ENCODE measurements at regions of chr12 and their contacts with region 1.

Region 1: GRCh38 chr12:124940549-124941527 is 26.4 kb upstream of the UBC start:
- DNase-seq: peak; percentile 90
- H3K4me3 Mint-ChIP-seq: no peak overlapping the region
- H3K27ac Mint-ChIP-seq: no peak overlapping the region
- H3K4me1 Mint-ChIP-seq: peaks cover 24% of the 10 kb centered on the region
- H3K27me3 Mint-ChIP-seq: no peaks in the 10 kb centered on the region

Region 2: DNA sequence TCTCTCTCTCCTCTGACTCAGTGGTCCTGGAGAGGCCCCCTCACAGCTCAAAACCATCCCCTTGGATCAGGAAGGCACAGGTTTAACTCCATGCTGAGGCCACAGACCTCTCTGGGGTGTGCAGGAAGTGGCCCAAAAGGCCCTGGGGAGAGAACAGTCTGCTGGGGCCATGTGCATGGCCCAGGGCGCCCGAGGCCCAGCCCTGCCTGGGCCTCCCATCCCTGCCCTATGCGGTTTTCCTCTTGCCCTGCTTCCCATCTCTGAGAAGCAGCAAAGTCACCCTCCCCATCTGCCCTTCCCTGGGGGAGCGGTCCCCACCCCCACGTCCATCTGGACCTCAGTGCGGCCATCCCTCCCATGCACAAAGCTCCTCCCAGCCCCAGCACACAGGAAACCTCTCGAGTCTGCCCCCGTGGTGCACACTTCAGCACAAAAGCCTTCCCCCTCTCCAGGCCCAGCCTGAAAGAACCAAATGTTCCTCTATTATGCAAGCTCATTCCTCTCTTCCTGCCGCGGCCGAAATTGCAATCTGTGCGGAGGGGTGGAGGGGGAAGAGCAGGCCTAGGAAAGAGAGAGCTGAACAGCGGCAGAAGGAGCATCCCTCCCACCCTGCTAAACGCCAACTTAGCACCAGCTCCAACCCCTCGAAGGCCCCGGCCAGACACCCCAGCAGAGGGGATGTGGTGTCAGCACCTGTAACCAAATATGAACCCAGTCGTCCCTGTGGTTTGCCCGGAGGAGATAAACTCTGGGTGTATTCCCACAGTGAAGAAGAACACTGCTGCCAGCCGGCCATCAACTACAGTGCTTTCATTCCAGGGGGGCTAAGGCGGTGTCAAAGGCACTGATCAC is 185.7 kb before region 1 on chr12:
- CTCF ChIA-PET with region 1: no interaction called
- DNase-seq: no peak
- H3K4me3 Mint-ChIP-seq: no peak overlapping the region
- H3K27ac Mint-ChIP-seq: peak overlapping the region; percentile 6
- H3K4me1 Mint-ChIP-seq: peaks cover 9% of the 10 kb centered on the region
- H3K27me3 Mint-ChIP-seq: peaks cover 63% of the 10 kb centered on the region

Region 3: DNA sequence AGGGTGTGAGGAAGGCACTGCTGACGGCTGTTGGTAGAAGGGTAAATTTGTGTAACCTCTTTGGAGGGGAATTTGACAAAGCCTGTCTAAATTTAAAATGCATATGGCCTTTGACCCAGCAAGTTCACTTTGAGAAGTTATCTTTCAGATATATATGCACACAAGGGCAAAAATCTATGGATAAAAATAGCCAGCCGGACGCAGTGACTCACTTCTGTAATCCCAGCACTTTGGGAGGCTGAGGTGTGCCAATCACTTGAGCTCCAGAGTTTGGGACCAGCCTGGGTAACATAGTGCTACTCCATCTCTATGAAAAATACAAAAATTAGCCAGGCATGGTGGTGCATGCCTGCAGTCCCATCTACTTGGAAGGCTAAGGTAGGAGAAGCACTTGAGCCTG is 39.8 kb before region 1 on chr12:
- CTCF ChIA-PET with region 1: interaction called, 107 read pairs
- DNase-seq: no peak
- H3K4me3 Mint-ChIP-seq: no peak overlapping the region
- H3K27ac Mint-ChIP-seq: no peak overlapping the region
- H3K4me1 Mint-ChIP-seq: peaks cover 21% of the 10 kb centered on the region
- H3K27me3 Mint-ChIP-seq: peaks cover 41% of the 10 kb centered on the region

Region 4: DNA sequence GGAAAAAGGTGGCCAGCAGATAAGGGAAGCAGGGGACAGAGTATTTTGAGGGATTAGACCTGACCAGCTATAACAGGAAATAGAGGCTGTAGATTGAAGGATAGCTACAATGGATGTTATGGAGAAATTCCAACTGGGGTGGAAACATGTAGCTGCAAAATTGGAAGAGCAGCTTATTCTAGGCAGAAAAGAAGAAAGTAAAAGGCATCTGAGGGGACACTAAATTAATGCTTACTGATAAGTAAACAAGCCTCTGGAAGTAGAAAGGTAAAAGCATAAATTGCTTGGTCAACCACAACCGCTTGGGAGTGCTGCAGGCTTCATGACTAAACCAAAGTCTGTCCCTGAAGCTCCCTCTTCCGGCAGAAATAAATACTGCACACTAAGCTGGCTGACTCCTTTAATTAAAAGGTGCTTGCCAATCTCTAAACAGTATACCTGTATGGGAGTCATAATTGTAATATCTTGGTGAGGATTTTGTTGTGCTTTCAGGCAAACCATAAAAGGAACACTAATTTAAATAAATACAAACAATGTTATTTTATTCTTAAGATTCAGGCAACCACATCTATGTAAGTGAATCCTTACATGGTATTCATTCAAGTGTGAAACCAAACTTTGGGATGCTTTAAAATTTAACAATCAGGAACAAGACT is 34.1 kb before region 1 on chr12:
- CTCF ChIA-PET with region 1: interaction called, 107 read pairs
- DNase-seq: peak; percentile 94
- H3K4me3 Mint-ChIP-seq: no peak overlapping the region
- H3K27ac Mint-ChIP-seq: no peak overlapping the region
- H3K4me1 Mint-ChIP-seq: peaks cover 32% of the 10 kb centered on the region
- H3K27me3 Mint-ChIP-seq: peaks cover 7% of the 10 kb centered on the region

Region 5: DNA sequence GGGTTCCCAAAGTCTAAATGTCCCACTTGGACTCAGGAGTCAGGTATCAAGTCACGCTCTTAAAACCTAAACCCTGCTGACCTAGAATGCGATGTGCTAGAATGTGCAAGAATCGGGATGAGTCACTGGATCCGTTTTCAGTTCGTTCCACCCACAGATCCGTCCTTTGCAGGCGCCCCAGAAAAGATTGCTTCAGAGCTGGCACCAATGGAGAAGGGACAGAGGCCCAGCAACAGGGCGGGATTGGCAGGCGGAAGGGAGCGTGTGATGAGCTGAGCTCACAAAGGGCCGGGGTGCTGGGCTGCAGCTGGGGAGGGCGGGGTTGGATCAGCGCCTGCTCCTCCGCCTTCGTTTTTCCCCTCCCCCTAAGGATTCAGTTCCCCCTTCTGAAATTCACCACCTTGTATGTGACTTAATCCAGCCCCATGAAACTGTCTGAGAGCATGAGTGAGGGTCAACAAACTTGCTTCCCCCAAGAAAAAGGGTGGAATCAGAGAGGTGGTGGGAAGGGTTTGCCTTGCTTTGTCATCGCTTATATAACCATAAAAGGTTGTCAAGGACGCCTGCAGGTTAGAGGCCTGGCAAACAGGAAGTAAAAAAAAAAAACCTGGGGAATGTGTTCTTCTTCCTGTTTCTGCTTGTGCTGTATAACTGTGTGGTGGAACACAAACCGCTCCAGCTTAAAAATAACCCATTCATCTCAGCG is 23.6 kb before region 1 on chr12:
- CTCF ChIA-PET with region 1: interaction called, 156 read pairs
- DNase-seq: peak; percentile 97
- H3K4me3 Mint-ChIP-seq: peak overlapping the region; percentile 99
- H3K27ac Mint-ChIP-seq: peak overlapping the region; percentile 100
- H3K4me1 Mint-ChIP-seq: peaks cover 87% of the 10 kb centered on the region
- H3K27me3 Mint-ChIP-seq: peaks cover 12% of the 10 kb centered on the region

Region 6: DNA sequence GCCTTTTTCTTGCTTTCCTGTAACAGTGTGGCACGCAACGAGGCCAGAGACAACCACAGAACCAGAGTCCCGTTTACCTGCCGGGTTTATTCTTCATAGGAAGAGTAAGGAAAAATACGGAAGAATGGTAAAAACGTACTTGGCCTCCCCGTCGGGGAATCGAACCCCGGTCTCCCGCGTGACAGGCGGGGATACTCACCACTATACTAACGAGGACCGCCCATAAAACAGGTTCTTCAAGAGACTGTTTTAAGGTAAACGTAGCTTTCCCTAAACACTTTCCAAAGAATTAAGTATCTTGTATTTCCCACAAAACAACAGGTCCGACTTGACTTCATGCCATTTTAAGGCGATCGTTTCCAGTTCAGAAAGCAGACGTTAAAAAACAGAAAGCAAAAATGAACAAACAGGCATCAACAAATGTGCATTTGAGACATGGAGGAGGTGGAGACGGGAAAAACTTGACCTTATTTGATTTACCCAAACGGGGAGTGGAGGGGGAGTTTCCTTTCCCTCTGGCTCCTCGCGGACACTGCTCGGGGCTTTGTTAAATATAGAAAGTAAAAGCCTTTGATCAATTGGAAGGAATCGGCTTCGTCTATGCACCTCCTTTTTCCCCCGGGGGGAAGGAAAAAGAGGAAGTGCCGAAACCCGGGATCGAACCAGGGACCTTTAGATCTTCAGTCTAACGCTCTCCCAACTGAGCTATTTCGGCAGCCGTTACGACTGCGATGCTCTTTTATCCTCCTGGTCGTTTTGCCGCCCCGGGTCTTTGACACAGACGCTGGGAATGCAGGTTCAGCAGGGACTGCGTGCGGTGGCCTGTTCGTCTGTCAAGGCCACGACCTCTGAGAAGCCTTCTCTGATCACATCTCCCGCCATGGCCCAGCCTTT is 13.4 kb before region 1 on chr12:
- CTCF ChIA-PET with region 1: interaction called, 156 read pairs
- DNase-seq: peak; percentile 93
- H3K4me3 Mint-ChIP-seq: peak overlapping the region; percentile 86
- H3K27ac Mint-ChIP-seq: peak overlapping the region; percentile 95
- H3K4me1 Mint-ChIP-seq: peaks cover 41% of the 10 kb centered on the region
- H3K27me3 Mint-ChIP-seq: peaks cover 19% of the 10 kb centered on the region

Measured in activated naive CD4-positive, alpha-beta T cell treated with anti-CD3 and anti-CD28 coated beads, Interleukin-2, amount 10 ng/mL, durations not matched to agents 7 days and 5 days (primary cell).